Left lung (tissue), 14 donors: ENCODE measurements at regions of chr2 and their contacts with region 1.

Region 1: GRCh38 chr2:207473049-207473930 is 56.5 kb upstream of the CREB1 start:
- DNase-seq: peak in 2 of 4 donors; percentile 24 to 46
- ATAC-seq: peak; percentile 90
- H3K4me3 ChIP-seq: no peak overlapping the region
- H3K27ac ChIP-seq: peak overlapping the region in 1 of 2 donors; percentile 30
- H3K4me1 ChIP-seq: peaks cover 3 to 22% of the 10 kb centered on the region in 2 donors
- H3K27me3 ChIP-seq: no peaks in the 10 kb centered on the region
- CTCF ChIP-seq: peak; percentile 28 to 42

Region 2: GRCh38 chr2:206693399-206694137 is 779.7 kb before region 1 on chr2:
- intact Hi-C with region 1: loop called in 1 of 2 experiments (anchors 10 kb)
- DNase-seq: peak in 2 of 4 donors; percentile 46 to 57
- ATAC-seq: peak; percentile 97
- H3K4me3 ChIP-seq: no peak overlapping the region
- H3K27ac ChIP-seq: no peak overlapping the region
- H3K4me1 ChIP-seq: no peaks in the 10 kb centered on the region
- H3K27me3 ChIP-seq: no peaks in the 10 kb centered on the region
- CTCF ChIP-seq: peak; percentile 54 to 65

Region 3: DNA sequence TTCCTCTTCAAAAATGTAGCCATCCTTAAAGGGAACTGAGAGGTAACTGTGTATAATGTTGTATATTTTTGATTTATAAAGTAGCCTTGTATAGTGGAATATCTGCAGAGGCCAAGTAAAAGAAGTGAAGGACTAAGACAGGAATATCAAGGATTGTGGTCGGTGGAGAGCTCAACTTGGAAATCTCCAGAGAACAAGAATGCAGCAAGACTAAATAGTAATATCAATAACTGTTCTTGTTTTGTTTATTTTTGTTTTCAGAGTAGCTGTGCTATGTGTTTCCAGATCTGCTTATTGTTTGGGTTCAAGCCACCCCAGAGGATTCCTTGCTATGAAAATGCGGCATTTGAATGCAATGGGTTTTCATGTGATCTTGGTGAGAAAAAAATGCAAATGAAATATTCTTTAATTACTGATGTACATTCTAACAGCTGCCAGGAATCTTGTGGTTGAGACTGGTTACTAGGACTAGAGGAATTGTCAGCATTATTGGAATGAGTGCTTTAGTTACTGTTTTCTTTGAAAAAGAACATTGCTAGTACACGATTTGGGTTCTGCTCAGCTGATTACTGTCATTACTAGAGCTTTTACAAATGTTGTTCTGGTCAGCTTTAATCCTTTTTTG is 682.9 kb before region 1 on chr2:
- intact Hi-C with region 1: no loop called
- DNase-seq: no peak
- ATAC-seq: no peak
- H3K4me3 ChIP-seq: no peak overlapping the region
- H3K27ac ChIP-seq: peak overlapping the region in 1 of 2 donors; percentile 7
- H3K4me1 ChIP-seq: no peaks in the 10 kb centered on the region
- H3K27me3 ChIP-seq: no peaks in the 10 kb centered on the region
- CTCF ChIP-seq: no peak

Region 4: GRCh38 chr2:206800506-206801417 is 672.5 kb before region 1 on chr2:
- intact Hi-C with region 1: loop called in 1 of 2 experiments (anchors 10 kb)
- DNase-seq: peak in 3 of 4 donors; percentile 36 to 69 (median 55)
- ATAC-seq: peak; percentile 93
- H3K4me3 ChIP-seq: no peak overlapping the region
- H3K27ac ChIP-seq: no peak overlapping the region
- H3K4me1 ChIP-seq: peaks cover 0 to 36% of the 10 kb centered on the region in 2 donors
- H3K27me3 ChIP-seq: no peaks in the 10 kb centered on the region
- CTCF ChIP-seq: peak; percentile 55 to 63

Region 5: DNA sequence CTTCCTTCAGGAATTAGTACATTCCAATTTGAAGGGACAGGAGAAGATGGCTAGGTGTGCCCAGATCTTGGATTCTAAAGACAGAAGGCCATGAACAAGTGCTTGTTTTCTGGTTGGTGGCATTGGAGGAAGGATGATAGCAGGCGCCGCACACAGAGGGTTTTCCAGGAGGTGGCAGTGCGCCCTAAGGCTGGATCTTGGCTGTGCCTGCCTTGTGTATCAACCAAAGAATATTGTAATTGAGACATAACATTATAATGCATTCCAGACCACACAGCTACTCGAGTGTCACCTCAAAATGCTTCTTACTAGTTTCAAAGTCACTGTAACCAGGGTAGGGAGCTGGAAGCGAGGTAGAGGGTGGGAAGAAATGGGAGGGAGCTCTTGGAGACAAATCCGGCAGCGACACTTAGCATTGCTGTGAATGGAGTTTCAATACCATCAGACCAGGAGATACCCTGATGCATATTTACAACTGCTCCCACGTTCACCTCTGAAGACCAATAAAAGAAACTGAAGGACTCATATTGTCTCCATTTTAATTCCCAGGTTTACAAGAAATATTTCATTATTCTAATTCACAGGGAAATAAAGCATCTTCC is 491.4 kb before region 1 on chr2:
- intact Hi-C with region 1: loop called (anchors 5 to 10 kb)
- DNase-seq: peak; percentile 53 to 80 (median 71)
- ATAC-seq: peak; percentile 98
- H3K4me3 ChIP-seq: no peak overlapping the region
- H3K27ac ChIP-seq: no peak overlapping the region
- H3K4me1 ChIP-seq: peaks cover 3 to 33% of the 10 kb centered on the region in 2 donors
- H3K27me3 ChIP-seq: no peaks in the 10 kb centered on the region
- CTCF ChIP-seq: peak; percentile 52 to 74

Region 6: GRCh38 chr2:206989306-206989705 is 484.0 kb before region 1 on chr2:
- intact Hi-C with region 1: loop called (anchors 5 to 10 kb)
- DNase-seq: peak in 3 of 4 donors; percentile 13 to 82 (median 36)
- ATAC-seq: peak; percentile 90
- H3K4me3 ChIP-seq: no peak overlapping the region
- H3K27ac ChIP-seq: no peak overlapping the region
- H3K4me1 ChIP-seq: peaks cover 0 to 14% of the 10 kb centered on the region in 2 donors
- H3K27me3 ChIP-seq: no peaks in the 10 kb centered on the region
- CTCF ChIP-seq: peak; percentile 68 to 79

Region 7: DNA sequence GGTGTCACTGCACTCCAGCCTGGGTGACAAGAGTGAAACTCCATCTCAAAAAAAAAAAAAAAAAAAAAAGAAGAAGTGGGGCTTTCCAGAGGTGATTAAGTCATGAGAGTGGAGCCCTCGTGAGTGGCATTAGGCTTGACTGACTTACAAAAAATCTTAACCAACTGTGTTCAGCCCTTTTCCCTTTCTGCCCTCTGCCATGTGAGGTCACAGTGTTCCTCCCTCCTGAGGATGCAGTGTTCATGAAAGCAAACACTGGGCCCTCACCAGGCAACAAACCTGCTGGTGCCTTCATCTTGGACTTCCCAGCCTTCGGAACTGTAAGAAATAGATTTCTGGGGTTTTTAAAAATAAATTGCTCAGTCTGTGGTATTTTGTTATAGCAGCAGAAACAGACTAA is 188.9 kb after region 1 on chr2:
- intact Hi-C with region 1: no loop called
- DNase-seq: peak in 1 of 4 donors; percentile 48
- ATAC-seq: peak; percentile 65
- H3K4me3 ChIP-seq: no peak overlapping the region
- H3K27ac ChIP-seq: peak overlapping the region in 1 of 2 donors; percentile 23
- H3K4me1 ChIP-seq: no peaks in the 10 kb centered on the region
- H3K27me3 ChIP-seq: no peaks in the 10 kb centered on the region
- CTCF ChIP-seq: no peak

Region 8: DNA sequence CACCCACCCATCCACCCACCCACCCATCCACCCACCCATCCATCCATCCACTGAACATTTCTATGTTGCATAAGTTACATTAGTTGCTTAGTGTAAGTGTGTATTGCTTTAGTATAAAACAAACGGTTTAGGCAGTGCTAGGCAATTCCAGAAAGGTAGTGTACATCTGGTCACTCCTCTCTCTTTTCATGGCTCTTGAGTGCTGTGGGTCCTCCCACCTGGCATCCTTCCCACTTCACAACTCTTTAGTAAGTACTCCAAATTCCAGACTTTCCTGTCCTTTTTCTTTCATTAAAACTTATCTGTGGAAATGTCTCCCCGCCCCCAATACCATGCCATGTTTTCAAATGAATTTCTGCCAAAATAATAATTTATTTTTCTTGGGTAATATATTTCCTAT is 429.5 kb after region 1 on chr2:
- intact Hi-C with region 1: no loop called
- DNase-seq: peak in 2 of 4 donors; percentile 44 to 65
- ATAC-seq: peak; percentile 89
- H3K4me3 ChIP-seq: no peak overlapping the region
- H3K27ac ChIP-seq: no peak overlapping the region
- H3K4me1 ChIP-seq: no peaks in the 10 kb centered on the region
- H3K27me3 ChIP-seq: no peaks in the 10 kb centered on the region
- CTCF ChIP-seq: no peak